ENCODE measurements at regions of chr12 and their contacts with region 1.

Region 1: GRCh38 chr12:5083955-5084849 is 40.5 kb downstream of the KCNA5 start:
- DNase-seq: no peak
- H3K4me3 ChIP-seq: no peak overlapping the region
- H3K27ac ChIP-seq: no peak overlapping the region
- H3K4me1 ChIP-seq: no peaks in the 10 kb centered on the region
- H3K27me3 ChIP-seq: no peaks in the 10 kb centered on the region
- CTCF ChIP-seq: peak; percentile 33 to 45 (median 42)
- POLR2A ChIP-seq: no peak

Region 2: DNA sequence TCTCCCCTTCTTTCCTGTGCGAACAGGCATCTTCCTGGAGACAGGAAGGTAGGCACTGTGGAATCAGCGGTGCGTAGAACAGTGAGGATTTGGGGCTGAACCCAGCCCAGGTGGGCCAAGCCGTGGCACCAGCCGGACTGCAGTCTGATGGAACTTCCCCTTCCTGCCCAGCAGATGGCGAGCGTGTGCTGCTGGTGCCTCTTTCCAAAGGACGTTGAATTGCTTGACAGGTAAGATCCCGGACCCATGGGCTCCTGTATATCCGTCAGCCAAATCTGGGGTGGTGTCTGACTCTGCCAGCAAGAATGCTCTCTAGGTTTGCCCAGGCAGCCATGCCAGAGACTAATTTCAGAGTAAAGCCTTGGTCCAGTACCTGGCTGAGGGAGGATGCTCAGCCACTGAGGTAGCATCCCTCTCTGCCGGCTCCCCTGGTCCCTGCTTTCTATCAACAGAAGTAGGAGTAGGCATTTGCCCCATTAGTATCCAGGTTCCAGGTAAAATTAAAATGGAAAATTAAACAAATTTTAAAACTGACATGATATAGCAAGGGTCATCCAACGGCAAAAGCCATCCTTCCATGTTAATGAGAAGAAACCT is 61.6 kb before region 1 on chr12:
- intact Hi-C with region 1: loop called (anchors 5 kb)
- DNase-seq: no peak
- H3K4me3 ChIP-seq: no peak overlapping the region
- H3K27ac ChIP-seq: no peak overlapping the region
- H3K4me1 ChIP-seq: no peaks in the 10 kb centered on the region
- H3K27me3 ChIP-seq: no peaks in the 10 kb centered on the region
- CTCF ChIP-seq: peak; percentile 53 to 77 (median 60)
- POLR2A ChIP-seq: no peak